ENCODE measurements at regions of chr12 and their contacts with region 1.

Region 1: GRCh38 chr12:85468356-85469157 is 188.5 kb downstream of the ALX1 start:
- DNase-seq: peak; percentile 39
- ATAC-seq: peak; percentile 93
- H3K4me3 Mint-ChIP-seq: peak overlapping the region; percentile 72
- H3K27ac Mint-ChIP-seq: peak overlapping the region; percentile 97
- H3K4me1 Mint-ChIP-seq: peaks cover 41% of the 10 kb centered on the region
- H3K27me3 Mint-ChIP-seq: no peaks in the 10 kb centered on the region
- CTCF ChIP-seq: peak; percentile 34; the same call in 1 of the 2 replicates

Region 2: DNA sequence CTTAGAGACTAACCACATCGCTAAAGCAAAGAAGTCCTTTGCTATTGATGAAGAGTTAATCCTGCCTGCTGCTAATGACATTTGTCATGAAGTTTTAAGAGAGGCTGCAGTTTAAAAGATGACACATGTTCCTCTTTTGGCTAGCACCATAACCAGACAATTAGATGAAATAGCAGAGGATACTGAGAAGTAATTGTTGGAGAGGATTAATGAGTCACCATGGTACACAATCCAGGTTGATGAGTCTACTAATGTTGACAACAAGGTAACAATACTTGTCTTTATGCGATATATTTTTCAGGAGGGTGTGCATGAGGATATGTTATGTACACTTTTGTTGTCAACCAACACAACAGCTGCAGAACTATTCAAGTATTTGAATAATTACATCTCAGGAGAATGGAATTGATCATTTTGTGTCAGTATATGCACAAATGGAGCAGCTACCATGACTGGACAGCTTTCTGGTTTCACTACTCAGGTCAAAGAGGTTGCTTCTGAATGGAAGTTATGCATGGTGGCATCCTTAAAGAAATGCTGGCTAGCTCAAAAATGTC is 375.7 kb before region 1 on chr12:
- CTCF ChIA-PET with region 1: no interaction called
- POLR2A ChIA-PET with region 1: no interaction called
- DNase-seq: no peak
- ATAC-seq: no peak
- H3K4me3 Mint-ChIP-seq: no peak overlapping the region
- H3K27ac Mint-ChIP-seq: no peak overlapping the region
- H3K4me1 Mint-ChIP-seq: peaks cover 19% of the 10 kb centered on the region
- H3K27me3 Mint-ChIP-seq: no peaks in the 10 kb centered on the region; the same call in 1 of the 2 replicates
- CTCF ChIP-seq: no peak

Region 3: GRCh38 chr12:85575120-85576096 is 106.9 kb after region 1 on chr12:
- CTCF ChIA-PET with region 1: interaction called, 15 read pairs
- POLR2A ChIA-PET with region 1: no interaction called
- DNase-seq: peak; percentile 59
- ATAC-seq: peak; percentile 92
- H3K4me3 Mint-ChIP-seq: no peak overlapping the region
- H3K27ac Mint-ChIP-seq: no peak overlapping the region
- H3K4me1 Mint-ChIP-seq: peaks cover 11% of the 10 kb centered on the region
- H3K27me3 Mint-ChIP-seq: no peaks in the 10 kb centered on the region
- CTCF ChIP-seq: peak; percentile 50; the same call in 1 of the 2 replicates

Region 4: DNA sequence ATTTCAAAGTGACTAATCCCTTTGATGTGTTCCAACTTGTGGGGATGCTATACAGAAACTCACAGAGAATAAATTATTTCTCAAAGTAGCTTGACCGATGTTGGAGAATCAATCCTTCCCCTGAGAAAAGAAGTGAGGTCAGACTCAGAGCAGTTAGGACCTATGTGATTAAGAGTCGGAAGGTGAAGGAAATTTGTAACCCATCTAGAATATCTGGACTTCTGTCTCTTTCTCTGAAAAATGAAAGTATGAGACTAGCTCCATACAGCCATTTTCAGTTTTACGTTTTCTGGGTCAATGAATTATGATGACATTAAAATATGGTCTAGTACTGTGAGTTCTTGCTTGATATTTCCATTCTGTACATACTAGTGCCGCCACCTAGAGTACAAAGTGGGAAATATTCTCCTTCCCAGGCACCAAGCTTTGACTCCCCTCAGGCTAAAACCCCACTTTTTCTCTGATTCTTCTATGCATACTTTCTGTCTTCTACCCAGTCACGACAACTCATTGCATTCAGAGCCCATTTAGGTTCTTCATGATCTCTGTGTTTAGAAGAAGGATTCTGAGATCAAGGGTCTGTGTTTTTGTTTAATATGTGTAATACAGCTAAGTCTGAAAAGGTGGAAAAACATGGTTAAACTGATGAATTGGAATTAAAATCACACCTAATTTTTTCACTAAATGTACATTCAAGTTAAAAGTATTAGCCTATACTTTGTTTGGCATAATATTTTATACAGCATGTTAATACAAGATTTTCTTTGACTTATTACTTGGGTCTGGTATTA is 398.6 kb after region 1 on chr12:
- CTCF ChIA-PET with region 1: interaction called, 17 read pairs
- POLR2A ChIA-PET with region 1: no interaction called
- DNase-seq: no peak
- ATAC-seq: peak; percentile 89
- H3K4me3 Mint-ChIP-seq: no peak overlapping the region
- H3K27ac Mint-ChIP-seq: no peak overlapping the region
- H3K4me1 Mint-ChIP-seq: peaks cover 13% of the 10 kb centered on the region
- H3K27me3 Mint-ChIP-seq: no peaks in the 10 kb centered on the region; the same call in 1 of the 2 replicates
- CTCF ChIP-seq: peak; percentile 70

Region 5: GRCh38 chr12:85920324-85920947 is 451.9 kb after region 1 on chr12:
- CTCF ChIA-PET with region 1: interaction called, 10 read pairs
- POLR2A ChIA-PET with region 1: no interaction called
- DNase-seq: no peak
- ATAC-seq: no peak
- H3K4me3 Mint-ChIP-seq: no peak overlapping the region
- H3K27ac Mint-ChIP-seq: no peak overlapping the region
- H3K4me1 Mint-ChIP-seq: peaks cover 18% of the 10 kb centered on the region
- H3K27me3 Mint-ChIP-seq: no peaks in the 10 kb centered on the region
- CTCF ChIP-seq: peak; percentile 55

Region 6: DNA sequence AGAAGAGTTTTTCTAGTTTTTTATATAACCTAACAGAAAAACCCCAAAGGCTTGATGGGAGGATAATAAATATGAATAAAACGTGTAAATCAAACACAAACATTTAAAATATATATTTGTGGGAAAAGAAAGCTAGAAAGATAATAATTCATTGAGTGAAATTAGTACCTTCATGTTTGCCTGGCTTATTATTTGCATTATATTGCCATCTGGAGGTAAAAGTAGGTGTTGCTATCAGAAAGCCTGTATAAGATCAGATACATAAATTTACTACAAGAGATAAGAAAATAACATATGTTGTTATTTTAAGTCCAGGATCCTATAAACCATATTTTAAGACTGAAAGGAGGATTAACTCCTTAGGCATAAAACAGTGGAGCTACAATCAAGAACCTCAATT is 483.3 kb after region 1 on chr12:
- CTCF ChIA-PET with region 1: interaction called, 17 read pairs
- POLR2A ChIA-PET with region 1: no interaction called
- DNase-seq: no peak
- ATAC-seq: no peak
- H3K4me3 Mint-ChIP-seq: no peak overlapping the region
- H3K27ac Mint-ChIP-seq: no peak overlapping the region
- H3K4me1 Mint-ChIP-seq: peaks cover 72% of the 10 kb centered on the region
- H3K27me3 Mint-ChIP-seq: no peaks in the 10 kb centered on the region
- CTCF ChIP-seq: peak; percentile 44; the same call in 1 of the 2 replicates